WTC11 (cell line): ENCODE measurements at regions of chr4 and their contacts with region 1.

Region 1: GRCh38 chr4:3436798-3437581 is 4.8 kb upstream of the HGFAC start:
- DNase-seq: no peak
- ATAC-seq: no peak
- H3K4me3 Mint-ChIP-seq: no peak overlapping the region
- H3K27ac Mint-ChIP-seq: no peak overlapping the region
- H3K4me1 Mint-ChIP-seq: no peaks in the 10 kb centered on the region
- H3K27me3 Mint-ChIP-seq: no peaks in the 10 kb centered on the region
- CTCF ChIP-seq: no peak

Region 2: GRCh38 chr4:3324093-3324815 is 112.7 kb before region 1 on chr4:
- CTCF ChIA-PET with region 1: interaction called, 42 read pairs
- POLR2A ChIA-PET with region 1: no interaction called
- DNase-seq: peak; percentile 78
- ATAC-seq: peak; percentile 93
- H3K4me3 Mint-ChIP-seq: no peak overlapping the region
- H3K27ac Mint-ChIP-seq: no peak overlapping the region
- H3K4me1 Mint-ChIP-seq: peaks cover 16% of the 10 kb centered on the region
- H3K27me3 Mint-ChIP-seq: no peaks in the 10 kb centered on the region
- CTCF ChIP-seq: no peak

Region 3: DNA sequence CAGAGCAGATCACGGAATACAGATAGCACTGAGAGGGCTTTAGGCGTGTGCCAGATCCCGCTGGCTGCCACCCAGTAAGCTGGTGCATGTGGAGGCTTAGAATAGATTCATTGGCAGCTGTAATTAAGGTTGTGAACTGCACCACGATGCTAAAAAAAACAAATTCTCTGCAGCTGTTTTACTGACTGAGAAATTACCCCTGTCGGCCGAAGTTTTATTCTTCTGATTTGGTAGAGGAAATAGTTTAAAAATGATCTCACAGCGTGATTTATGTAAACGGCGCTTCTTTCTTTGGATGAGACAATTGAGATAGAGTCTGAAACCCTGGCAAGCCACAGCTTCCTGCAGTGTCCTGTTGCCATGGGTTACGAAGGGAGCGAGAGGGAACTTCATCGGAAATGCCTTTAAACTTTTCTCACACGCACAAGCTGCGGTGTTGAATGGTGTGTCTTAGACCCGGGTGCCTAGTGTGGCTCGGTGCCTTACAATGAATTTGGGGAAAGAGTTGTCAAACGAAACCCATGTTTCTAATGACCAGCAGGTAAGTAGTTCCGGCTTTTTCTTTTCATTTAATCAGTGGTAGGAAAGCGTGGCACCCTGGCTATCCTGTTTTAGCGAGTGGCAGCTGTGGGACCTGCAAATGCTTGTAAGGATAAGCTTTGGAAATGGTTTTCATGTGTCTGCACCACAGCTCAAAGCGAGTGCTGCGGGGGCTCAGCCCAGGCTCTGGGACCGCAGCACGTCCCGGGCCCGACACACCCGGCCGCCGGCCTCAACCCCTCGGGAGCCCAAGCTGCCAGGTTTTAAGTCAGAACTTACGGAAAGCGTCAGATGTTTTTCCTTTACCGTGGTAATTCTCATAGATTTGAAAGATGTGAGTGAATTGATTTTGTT is 67.0 kb before region 1 on chr4:
- CTCF ChIA-PET with region 1: interaction called, 10 read pairs
- POLR2A ChIA-PET with region 1: no interaction called
- DNase-seq: no peak
- ATAC-seq: peak; percentile 60
- H3K4me3 Mint-ChIP-seq: peak overlapping the region; percentile 54
- H3K27ac Mint-ChIP-seq: peak overlapping the region; percentile 39
- H3K4me1 Mint-ChIP-seq: peaks cover 44% of the 10 kb centered on the region
- H3K27me3 Mint-ChIP-seq: peaks cover 25% of the 10 kb centered on the region
- CTCF ChIP-seq: no peak

Region 4: GRCh38 chr4:3418029-3418762 is 18.8 kb before region 1 on chr4:
- CTCF ChIA-PET with region 1: interaction called, 12 read pairs
- POLR2A ChIA-PET with region 1: interaction called, 3 read pairs
- DNase-seq: peak; percentile 63
- ATAC-seq: peak; percentile 74
- H3K4me3 Mint-ChIP-seq: no peak overlapping the region
- H3K27ac Mint-ChIP-seq: peak overlapping the region; percentile 60; the same call in 1 of the 2 replicates
- H3K4me1 Mint-ChIP-seq: no peaks in the 10 kb centered on the region
- H3K27me3 Mint-ChIP-seq: no peaks in the 10 kb centered on the region
- CTCF ChIP-seq: peak; percentile 33; the same call in 1 of the 2 replicates

Region 5: GRCh38 chr4:3599951-3600350 is 163.0 kb after region 1 on chr4:
- CTCF ChIA-PET with region 1: no interaction called
- POLR2A ChIA-PET with region 1: no interaction called
- DNase-seq: no peak
- ATAC-seq: no peak
- H3K4me3 Mint-ChIP-seq: no peak overlapping the region
- H3K27ac Mint-ChIP-seq: no peak overlapping the region
- H3K4me1 Mint-ChIP-seq: no peaks in the 10 kb centered on the region
- H3K27me3 Mint-ChIP-seq: peaks cover 10% of the 10 kb centered on the region; the same call in 1 of the 2 replicates
- CTCF ChIP-seq: no peak